OCI-LY7 (cell line): ENCODE measurements at regions of chr18 and their contacts with region 1.

Region 1: GRCh38 chr18:26468931-26469340 is 79.4 kb downstream of the KCTD1 start:
- DNase-seq: peak; percentile 80
- H3K4me3 ChIP-seq: peak overlapping the region; percentile 41
- H3K27ac ChIP-seq: peak overlapping the region; percentile 65
- H3K4me1 ChIP-seq: peaks cover 34% of the 10 kb centered on the region
- CTCF ChIP-seq: peak; percentile 76

Region 2: GRCh38 chr18:26252411-26252810 is 216.5 kb before region 1 on chr18:
- CTCF ChIA-PET with region 1: no interaction called
- POLR2A ChIA-PET with region 1: no interaction called
- intact Hi-C with region 1: no loop called
- DNase-seq: no peak
- H3K4me3 ChIP-seq: no peak overlapping the region
- H3K27ac ChIP-seq: no peak overlapping the region
- H3K4me1 ChIP-seq: peaks cover 57% of the 10 kb centered on the region
- CTCF ChIP-seq: no peak

Region 3: DNA sequence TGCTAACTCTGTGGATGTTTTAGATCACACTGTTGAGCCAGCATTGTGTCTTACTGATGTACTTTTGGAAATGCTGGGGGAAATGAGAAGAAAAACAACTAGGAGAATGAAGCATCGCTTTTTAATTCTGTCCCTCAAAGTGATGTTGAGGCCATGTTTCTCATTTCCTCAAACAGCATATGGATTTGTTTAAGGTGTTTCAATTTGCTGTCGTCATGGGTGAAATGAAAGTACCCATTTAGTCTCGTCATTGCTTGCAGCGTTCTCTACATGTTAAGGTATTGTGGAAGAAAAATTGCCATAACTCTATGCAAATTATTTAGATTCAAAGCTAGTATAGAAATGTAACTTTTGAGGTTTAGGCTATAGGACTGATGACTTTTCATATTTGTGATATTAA is 71.9 kb before region 1 on chr18:
- CTCF ChIA-PET with region 1: no interaction called
- POLR2A ChIA-PET with region 1: no interaction called
- intact Hi-C with region 1: no loop called
- DNase-seq: no peak
- H3K4me3 ChIP-seq: no peak overlapping the region
- H3K27ac ChIP-seq: no peak overlapping the region
- H3K4me1 ChIP-seq: no peaks in the 10 kb centered on the region
- CTCF ChIP-seq: no peak

Region 4: GRCh38 chr18:26458526-26459232 is 10.3 kb before region 1 on chr18:
- CTCF ChIA-PET with region 1: interaction called, 13 read pairs
- POLR2A ChIA-PET with region 1: interaction called, 21 read pairs
- intact Hi-C with region 1: no loop called
- DNase-seq: no peak
- H3K4me3 ChIP-seq: no peak overlapping the region
- H3K27ac ChIP-seq: no peak overlapping the region
- H3K4me1 ChIP-seq: peaks cover 65% of the 10 kb centered on the region
- CTCF ChIP-seq: no peak

Region 5: GRCh38 chr18:26621161-26622026 is 152.5 kb after region 1 on chr18:
- CTCF ChIA-PET with region 1: no interaction called
- POLR2A ChIA-PET with region 1: interaction called, 11 read pairs
- intact Hi-C with region 1: no loop called
- DNase-seq: peak; percentile 60
- H3K4me3 ChIP-seq: peak overlapping the region; percentile 38
- H3K27ac ChIP-seq: no peak overlapping the region
- H3K4me1 ChIP-seq: no peaks in the 10 kb centered on the region
- CTCF ChIP-seq: peak; percentile 81